GM10248 (cell line): ENCODE measurements at regions of chr17 and their contacts with region 1.

Region 1: GRCh38 chr17:8091033-8091687 is 3.6 kb upstream of the ALOX12B start:
- DNase-seq: peak; percentile 70
- CTCF ChIP-seq: no peak

Region 2: DNA sequence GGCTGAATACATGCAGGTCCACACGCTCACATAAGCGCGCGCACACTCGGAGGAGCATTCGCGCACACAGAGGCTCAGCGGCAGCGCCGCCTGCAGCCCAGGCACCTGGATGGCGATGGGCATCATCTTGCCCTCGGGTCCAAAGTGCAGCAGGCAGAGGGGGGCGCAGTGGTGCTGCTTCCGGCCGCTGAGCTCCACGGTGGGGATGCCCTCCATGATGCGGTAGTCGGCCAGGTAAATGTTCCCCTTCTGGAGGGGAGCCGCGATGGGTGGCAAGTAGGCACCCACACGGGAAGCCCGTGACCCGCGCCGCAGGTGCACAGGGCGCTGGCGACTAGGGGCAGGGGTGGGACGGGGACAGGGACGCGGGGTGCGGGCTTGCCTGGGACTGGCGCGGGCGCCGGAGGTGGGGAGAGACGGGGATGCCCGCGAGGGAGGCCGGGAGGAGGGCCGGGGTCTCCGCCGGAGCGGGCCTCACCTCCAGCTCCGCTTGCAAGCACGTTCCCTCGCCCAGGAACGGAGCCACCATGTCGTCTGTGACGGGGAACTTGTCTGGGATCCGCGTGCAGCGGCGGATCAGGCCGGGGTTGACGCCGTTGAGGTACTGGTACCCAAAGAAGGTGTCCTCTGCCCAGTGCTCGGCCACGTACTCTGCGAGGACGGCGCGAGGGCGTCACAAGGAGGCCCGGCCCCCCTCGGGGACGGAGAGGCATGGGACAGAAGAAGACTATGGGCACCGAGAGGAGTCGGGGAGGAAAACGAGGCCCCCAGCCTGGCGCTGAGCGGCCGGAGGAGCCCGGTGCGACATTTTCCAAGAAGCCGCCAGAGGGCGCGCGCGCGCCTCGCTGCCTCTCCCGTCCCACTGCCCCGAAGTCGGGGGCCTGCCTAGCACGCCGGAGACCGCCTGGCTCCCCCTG is 11.6 kb before region 1 on chr17:
- CTCF ChIA-PET with region 1: interaction called, 261 read pairs
- POLR2A ChIA-PET with region 1: no interaction called
- DNase-seq: peak; percentile 92
- CTCF ChIP-seq: peak; percentile 93

Region 3: GRCh38 chr17:8109661-8110464 is 18.7 kb after region 1 on chr17:
- CTCF ChIA-PET with region 1: interaction called, 191 read pairs
- POLR2A ChIA-PET with region 1: no interaction called
- DNase-seq: peak; percentile 87
- CTCF ChIP-seq: peak; percentile 93

Region 4: DNA sequence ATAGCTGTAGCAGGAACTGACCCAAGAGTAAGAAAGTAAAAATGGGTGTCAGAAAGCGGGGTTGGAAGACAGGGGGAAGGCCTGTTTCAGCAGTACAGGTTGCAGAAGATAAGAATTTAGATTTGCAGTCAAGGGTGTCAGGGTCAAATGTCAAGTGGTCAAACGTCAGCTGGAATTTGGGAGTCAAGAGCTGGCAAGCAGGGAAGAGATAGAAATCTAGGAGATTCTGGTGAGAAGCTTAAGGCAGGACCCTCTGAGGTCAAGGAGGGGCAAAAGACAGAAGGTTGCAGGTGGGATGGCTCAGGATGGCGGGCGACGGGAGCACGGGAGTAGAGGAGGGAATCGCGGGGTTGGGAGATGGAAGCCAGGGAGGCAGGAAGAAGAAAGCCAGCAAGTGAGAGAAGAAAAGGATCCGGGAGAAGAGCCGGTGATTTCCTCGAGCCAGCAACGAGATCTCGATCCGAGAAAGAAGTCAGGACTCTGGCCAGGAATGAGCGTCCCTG is 203.7 kb after region 1 on chr17:
- CTCF ChIA-PET with region 1: interaction called, 10 read pairs
- POLR2A ChIA-PET with region 1: interaction called, 7 read pairs
- DNase-seq: no peak
- CTCF ChIP-seq: no peak

Region 5: GRCh38 chr17:8300627-8301242 is 209.6 kb after region 1 on chr17:
- CTCF ChIA-PET with region 1: interaction called, 10 read pairs
- POLR2A ChIA-PET with region 1: no interaction called
- DNase-seq: peak; percentile 86
- CTCF ChIP-seq: peak; percentile 88